ENCODE measurements at regions of chr2 and their contacts with region 1.

Region 1: GRCh38 chr2:126776692-126777619 is 121.0 kb downstream of the GYPC start:
- DNase-seq: peak; percentile 79
- H3K4me3 ChIP-seq: peak overlapping the region; percentile 51
- H3K27ac ChIP-seq: no peak overlapping the region
- H3K4me1 ChIP-seq: no peaks in the 10 kb centered on the region
- H3K27me3 ChIP-seq: no peaks in the 10 kb centered on the region
- CTCF ChIP-seq: peak; percentile 97

Region 2: GRCh38 chr2:126244937-126245336 is 532.0 kb before region 1 on chr2:
- CTCF ChIA-PET with region 1: no interaction called
- POLR2A ChIA-PET with region 1: no interaction called
- intact Hi-C with region 1: loop called (anchors 1 kb)
- DNase-seq: peak; percentile 54
- H3K4me3 ChIP-seq: no peak overlapping the region
- H3K27ac ChIP-seq: no peak overlapping the region
- H3K4me1 ChIP-seq: no peaks in the 10 kb centered on the region
- H3K27me3 ChIP-seq: no peaks in the 10 kb centered on the region
- CTCF ChIP-seq: peak; percentile 58

Region 3: GRCh38 chr2:126359494-126359893 is 417.5 kb before region 1 on chr2:
- CTCF ChIA-PET with region 1: no interaction called
- POLR2A ChIA-PET with region 1: no interaction called
- intact Hi-C with region 1: loop called (anchors 2 kb)
- DNase-seq: peak; percentile 47
- H3K4me3 ChIP-seq: no peak overlapping the region
- H3K27ac ChIP-seq: no peak overlapping the region
- H3K4me1 ChIP-seq: no peaks in the 10 kb centered on the region
- H3K27me3 ChIP-seq: no peaks in the 10 kb centered on the region
- CTCF ChIP-seq: peak; percentile 36

Region 4: GRCh38 chr2:126527836-126528507 is 249.0 kb before region 1 on chr2:
- CTCF ChIA-PET with region 1: interaction called, 10 read pairs
- POLR2A ChIA-PET with region 1: no interaction called
- intact Hi-C with region 1: loop called (anchors 1 kb)
- DNase-seq: peak; percentile 41
- H3K4me3 ChIP-seq: no peak overlapping the region
- H3K27ac ChIP-seq: no peak overlapping the region
- H3K4me1 ChIP-seq: no peaks in the 10 kb centered on the region
- H3K27me3 ChIP-seq: no peaks in the 10 kb centered on the region
- CTCF ChIP-seq: peak; percentile 68

Region 5: GRCh38 chr2:126971481-126972278 is 194.7 kb after region 1 on chr2:
- CTCF ChIA-PET with region 1: interaction called, 3 read pairs
- POLR2A ChIA-PET with region 1: no interaction called
- intact Hi-C with region 1: loop called (anchors 5 kb)
- DNase-seq: peak; percentile 75
- H3K4me3 ChIP-seq: peak overlapping the region; percentile 42
- H3K27ac ChIP-seq: no peak overlapping the region
- H3K4me1 ChIP-seq: peaks cover 27% of the 10 kb centered on the region
- H3K27me3 ChIP-seq: peaks cover 14% of the 10 kb centered on the region
- CTCF ChIP-seq: peak; percentile 91

Measured in A673 (cell line).